Cardiac septum (tissue), 1 donor: ENCODE measurements at regions of chr9 and their contacts with region 1.

Region 1: DNA sequence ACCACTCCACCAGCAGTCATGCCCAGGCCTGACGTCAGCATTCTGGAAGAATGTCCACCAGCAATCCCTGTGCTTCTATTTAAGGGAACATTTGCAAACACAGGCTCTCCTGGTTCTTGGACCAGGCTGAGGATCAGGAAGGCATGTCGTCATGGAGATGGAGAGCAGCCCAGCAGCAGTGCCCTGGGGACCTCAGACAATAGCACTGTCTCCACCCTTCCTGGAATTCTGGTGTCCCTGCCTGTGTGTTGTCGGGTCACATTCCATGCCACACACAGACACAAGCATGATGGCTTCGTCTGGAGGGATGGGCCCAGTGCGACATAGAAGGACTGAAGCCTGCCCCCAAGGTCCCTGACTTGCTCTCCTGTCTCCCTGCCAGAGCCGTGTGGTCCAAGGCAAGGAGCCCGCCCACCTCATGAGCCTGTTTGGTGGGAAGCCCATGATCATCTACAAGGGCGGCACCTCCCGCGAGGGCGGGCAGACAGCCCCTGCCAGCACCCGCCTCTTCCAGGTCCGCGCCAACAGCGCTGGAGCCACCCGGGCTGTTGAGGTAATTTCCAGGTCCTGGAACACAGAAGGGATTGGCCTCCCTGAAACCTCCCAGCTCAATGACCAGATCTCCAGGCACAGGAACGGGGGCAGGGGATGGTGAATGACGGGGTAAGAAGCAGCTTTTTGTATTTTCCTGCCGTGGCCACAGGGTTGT is 43.8 kb downstream of the STOM start:
- DNase-seq: peak; percentile 93

Region 2: GRCh38 chr9:121350993-121351561 is 24.8 kb after region 1 on chr9:
- intact Hi-C with region 1: loop called (anchors 1 kb)
- DNase-seq: peak; percentile 82

Region 3: DNA sequence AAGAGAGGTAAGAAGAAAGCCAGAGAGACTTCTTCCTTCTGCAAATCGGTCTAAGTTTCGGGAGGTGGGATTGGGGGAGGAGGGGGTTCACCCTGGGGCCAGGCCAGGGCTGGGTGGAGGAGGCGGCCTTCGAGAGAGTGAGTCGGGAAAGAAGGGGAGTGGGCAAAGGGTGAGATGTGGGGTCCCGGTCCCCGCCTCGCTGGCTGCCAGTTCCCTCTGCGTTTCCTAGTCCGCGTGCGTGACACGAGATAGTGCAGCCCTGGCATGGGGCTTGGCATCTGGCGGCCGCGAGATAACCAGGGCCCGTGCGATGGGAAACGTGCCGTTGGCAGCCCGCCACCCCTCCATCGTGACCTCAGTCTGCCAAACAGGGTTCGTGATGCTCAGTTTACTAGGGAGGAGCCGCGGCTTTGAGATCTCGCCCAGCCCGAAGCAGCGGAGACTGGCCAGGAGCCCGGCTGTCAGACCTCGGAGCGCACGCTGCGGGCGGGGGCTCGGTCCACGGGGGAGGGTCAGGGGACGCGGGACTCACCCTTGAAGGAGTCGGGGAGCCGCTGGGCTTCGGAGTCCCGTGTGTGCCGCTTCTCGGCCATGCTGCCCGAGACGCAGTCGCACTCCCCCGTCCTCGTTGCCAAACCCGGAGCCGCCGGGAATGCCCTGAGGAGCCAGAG is 43.4 kb after region 1 on chr9 and contains the start of gene STOM:
- intact Hi-C with region 1: loop called (anchors 2 kb)
- DNase-seq: peak; percentile 93
- total RNA-seq, gene STOM: 191 TPM